ENCODE measurements at regions of chr16 and their contacts with region 1.

Region 1: DNA sequence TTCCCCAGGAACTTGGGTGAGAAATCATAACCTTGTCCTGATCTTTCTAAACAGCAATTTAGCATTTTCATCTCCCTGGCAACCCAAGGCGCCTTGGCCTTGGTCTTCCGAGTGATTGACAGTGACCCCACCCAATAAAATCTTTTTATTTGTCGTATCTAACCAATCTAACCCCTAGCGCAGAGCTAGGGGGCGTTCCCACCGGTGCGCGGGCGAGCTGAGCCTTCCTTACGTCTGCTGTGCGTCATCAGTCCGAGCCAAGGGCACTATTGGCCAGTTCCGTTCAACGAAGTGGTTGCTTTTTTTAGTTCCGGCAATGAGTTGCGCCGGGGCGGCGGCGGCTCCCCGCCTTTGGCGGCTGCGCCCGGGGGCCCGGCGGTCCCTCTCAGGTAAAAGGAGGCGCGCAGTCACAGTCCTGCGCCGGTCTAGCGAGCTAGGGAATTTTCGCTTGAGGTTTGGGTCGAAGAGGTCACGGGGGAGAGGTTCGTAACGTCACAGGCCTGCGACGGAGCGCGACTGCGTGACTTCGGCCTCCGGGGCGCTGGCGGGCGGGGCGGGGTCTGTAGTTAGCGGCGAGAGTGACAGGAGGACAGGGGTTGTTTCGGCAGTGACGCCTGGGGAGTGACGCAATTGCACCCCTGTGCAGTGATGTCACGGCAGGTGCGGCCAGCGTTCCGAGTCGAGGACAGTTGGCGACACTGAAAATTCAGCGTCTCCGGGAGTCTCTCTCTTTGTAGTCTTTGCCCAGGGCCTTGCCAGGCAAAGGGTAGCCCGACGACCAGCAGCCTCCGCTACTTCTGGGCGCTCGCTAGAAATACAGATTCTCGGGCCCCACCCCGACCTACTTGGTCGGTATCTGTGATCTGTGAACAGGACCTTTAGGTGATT is at the start of gene COQ7:
- DNase-seq: peak; percentile 99
- ATAC-seq: peak; percentile 93
- H3K4me3 Mint-ChIP-seq: peak within 1 kb of the TSS; percentile 90
- H3K27ac Mint-ChIP-seq: peak within 1 kb of the TSS; percentile 98
- H3K4me1 Mint-ChIP-seq: peaks cover 8% of the 10 kb centered on the region
- H3K27me3 Mint-ChIP-seq: no peaks in the 10 kb centered on the region
- CTCF ChIP-seq: no peak
- total RNA-seq, gene COQ7: 16.9 to 19.2 TPM

Region 2: GRCh38 chr16:18789850-18790724 is 277.5 kb before region 1 on chr16 and contains the start of gene RPS15A:
- CTCF ChIA-PET with region 1: no interaction called
- POLR2A ChIA-PET with region 1: no interaction called
- intact Hi-C with region 1: loop called (anchors 5 kb)
- DNase-seq: peak; percentile 96
- ATAC-seq: peak; percentile 94
- H3K4me3 Mint-ChIP-seq: peak within 1 kb of the TSS; percentile 98
- H3K27ac Mint-ChIP-seq: peak within 1 kb of the TSS; percentile 93
- H3K4me1 Mint-ChIP-seq: peaks cover 38% of the 10 kb centered on the region
- H3K27me3 Mint-ChIP-seq: no peaks in the 10 kb centered on the region
- CTCF ChIP-seq: no peak
- total RNA-seq, gene RPS15A: 2,201 to 2,213 TPM

Region 3: DNA sequence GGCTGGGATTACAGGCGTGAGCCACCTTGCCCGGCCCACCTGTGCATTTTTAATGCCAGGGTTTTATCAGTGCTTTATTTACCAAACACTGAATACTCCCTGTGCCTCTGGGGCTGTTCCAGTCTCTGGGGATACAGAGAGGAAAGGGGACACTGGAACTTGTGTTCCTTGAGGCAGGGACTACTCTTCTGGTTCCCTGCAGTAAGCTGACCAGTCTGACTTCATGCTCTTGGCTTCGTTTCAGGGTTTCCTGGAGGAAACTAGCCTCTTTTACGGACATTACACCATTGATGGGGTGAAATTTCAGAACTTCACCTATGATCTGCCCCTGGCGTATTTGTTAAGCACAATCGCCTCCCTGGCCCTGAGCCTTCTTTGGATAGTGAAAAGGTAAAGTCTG is 37.6 kb before region 1 on chr16:
- CTCF ChIA-PET with region 1: no interaction called
- POLR2A ChIA-PET with region 1: no interaction called
- intact Hi-C with region 1: no loop called
- DNase-seq: no peak
- ATAC-seq: no peak
- H3K4me3 Mint-ChIP-seq: no peak overlapping the region
- H3K27ac Mint-ChIP-seq: no peak overlapping the region
- H3K4me1 Mint-ChIP-seq: no peaks in the 10 kb centered on the region
- H3K27me3 Mint-ChIP-seq: peaks cover 2% of the 10 kb centered on the region
- CTCF ChIP-seq: no peak